ENCODE measurements at regions of chrX and their contacts with region 1.

Region 1: DNA sequence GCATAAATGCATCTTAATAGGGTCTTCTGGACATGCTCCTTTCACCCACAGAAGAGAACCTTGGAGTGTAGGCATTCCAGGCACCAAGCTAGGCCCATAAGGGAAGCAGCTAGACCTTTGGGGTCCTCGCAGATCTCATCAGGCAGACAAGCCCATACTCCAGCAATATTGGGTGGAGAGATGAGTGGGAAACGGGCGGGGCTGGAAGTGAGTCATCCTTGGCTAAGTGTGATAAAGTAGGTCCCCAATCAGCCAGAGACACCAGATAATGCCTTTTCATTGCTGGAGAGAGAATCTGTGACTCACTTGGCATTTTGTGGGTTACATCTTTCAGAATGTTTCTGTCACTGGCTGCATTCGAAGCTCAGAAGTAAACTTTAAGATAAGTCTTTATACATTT is 133.3 kb upstream of the MBNL3 start:
- DNase-seq: no peak
- ATAC-seq: no peak
- H3K4me3 ChIP-seq: no peak overlapping the region
- H3K27ac ChIP-seq: no peak overlapping the region
- H3K4me1 ChIP-seq: no peaks in the 10 kb centered on the region
- H3K27me3 ChIP-seq: no peaks in the 10 kb centered on the region
- CTCF ChIP-seq: no peak
- POLR2A ChIP-seq: no peak

Region 2: GRCh38 chrX:132292793-132293192 is 329.3 kb before region 1 on chrX:
- intact Hi-C with region 1: loop called (anchors 10 kb)
- DNase-seq: peak in 3 of 4 donors; percentile 23 to 37 (median 34)
- ATAC-seq: no peak
- H3K4me3 ChIP-seq: no peak overlapping the region
- H3K27ac ChIP-seq: no peak overlapping the region
- H3K4me1 ChIP-seq: no peaks in the 10 kb centered on the region
- H3K27me3 ChIP-seq: no peaks in the 10 kb centered on the region
- CTCF ChIP-seq: peak; percentile 33 to 78 (median 48)
- POLR2A ChIP-seq: no peak

Region 3: GRCh38 chrX:132413459-132413858 is 208.7 kb before region 1 on chrX:
- intact Hi-C with region 1: no loop called
- DNase-seq: no peak
- ATAC-seq: no peak
- H3K4me3 ChIP-seq: no peak overlapping the region
- H3K27ac ChIP-seq: no peak overlapping the region
- H3K4me1 ChIP-seq: peaks cover 8% of the 10 kb centered on the region
- H3K27me3 ChIP-seq: no peaks in the 10 kb centered on the region
- CTCF ChIP-seq: no peak
- POLR2A ChIP-seq: no peak